Activated CD4-positive, alpha-beta memory T cell treated with anti-CD3 and anti-CD28 coated beads for 36 hours (primary cell): ENCODE measurements at regions of chr11 and their contacts with region 1.

Region 1: DNA sequence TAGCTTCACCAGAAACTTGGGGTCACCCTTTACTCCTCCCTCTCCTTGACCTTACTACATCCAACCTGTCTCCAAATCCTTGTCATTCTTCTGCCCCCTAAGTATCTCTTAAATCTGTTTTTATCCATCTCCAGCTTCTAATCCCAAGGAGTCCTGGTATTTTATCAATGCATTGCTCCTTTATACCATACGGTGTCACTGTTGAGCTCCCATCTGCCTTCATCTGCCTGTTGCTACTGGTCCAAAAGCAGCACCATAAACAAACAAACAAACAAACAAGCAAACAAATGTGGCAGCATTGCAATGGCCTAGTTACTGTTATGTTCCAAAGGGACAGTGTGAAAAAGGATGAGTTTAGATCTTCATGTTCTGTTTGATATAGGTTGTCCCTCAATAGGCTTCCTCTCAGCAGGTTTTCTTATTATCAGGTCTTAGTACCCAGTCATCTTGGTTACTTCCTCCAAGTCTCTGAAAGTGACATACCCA is 34.2 kb downstream of the DNHD1 start:
- DNase-seq: no peak
- H3K4me3 Mint-ChIP-seq: no peak overlapping the region
- H3K27ac Mint-ChIP-seq: no peak overlapping the region
- H3K4me1 Mint-ChIP-seq: peaks cover 11% of the 10 kb centered on the region
- H3K27me3 Mint-ChIP-seq: no peaks in the 10 kb centered on the region

Region 2: DNA sequence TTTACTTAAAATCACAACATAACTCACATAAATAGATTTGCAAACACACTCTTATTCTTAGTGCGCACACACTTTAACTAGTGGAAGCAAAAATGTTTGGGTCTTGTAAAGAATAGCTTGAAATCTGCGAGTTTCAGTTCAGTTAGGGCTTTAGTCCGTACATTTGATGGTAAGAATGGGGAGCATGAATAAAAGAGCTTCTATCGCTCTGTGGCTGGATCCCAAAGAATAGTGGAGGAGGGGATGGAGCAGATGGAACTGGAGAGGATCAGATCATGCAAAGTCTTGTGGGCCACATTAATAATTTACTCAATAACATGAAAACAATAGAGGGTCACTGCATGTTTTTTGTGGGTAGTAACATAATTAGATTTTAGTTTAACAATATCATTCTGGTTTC is 10.0 kb after region 1 on chr11:
- CTCF ChIA-PET with region 1: interaction called, 12 read pairs
- POLR2A ChIA-PET with region 1: no interaction called
- intact Hi-C with region 1: no loop called
- DNase-seq: no peak
- H3K4me3 Mint-ChIP-seq: no peak overlapping the region
- H3K27ac Mint-ChIP-seq: no peak overlapping the region
- H3K4me1 Mint-ChIP-seq: no peaks in the 10 kb centered on the region
- H3K27me3 Mint-ChIP-seq: no peaks in the 10 kb centered on the region